ENCODE measurements at regions of chr15 and their contacts with region 1.

Region 1: GRCh38 chr15:51205071-51205959 is 110.6 kb upstream of the TNFAIP8L3 start:
- DNase-seq: no peak
- H3K4me3 ChIP-seq: no peak overlapping the region
- H3K27ac ChIP-seq: no peak overlapping the region
- H3K4me1 ChIP-seq: peaks cover 24% of the 10 kb centered on the region
- H3K27me3 ChIP-seq: no peaks in the 10 kb centered on the region
- CTCF ChIP-seq: no peak

Region 2: DNA sequence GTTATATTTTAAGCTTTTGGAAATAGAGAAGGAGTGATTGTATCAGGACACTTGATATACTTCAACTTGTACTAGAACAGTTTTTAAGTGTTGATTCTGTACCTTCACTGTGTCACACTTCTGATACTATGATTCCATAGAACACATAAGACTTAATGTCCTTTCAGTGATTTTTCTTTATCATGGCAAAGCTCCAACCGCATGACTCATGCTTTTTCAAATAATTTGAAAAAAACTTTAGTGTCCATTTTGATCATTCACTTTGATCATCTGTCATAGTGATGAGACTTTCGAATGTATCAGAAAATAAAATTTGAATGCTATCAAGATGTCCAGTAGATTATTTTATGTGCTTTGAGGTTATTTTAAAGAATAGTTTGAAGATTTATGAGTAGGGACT is 264.8 kb before region 1 on chr15:
- CTCF ChIA-PET with region 1: interaction called, 13 read pairs
- dilution Hi-C with region 1: no loop called
- in situ Hi-C with region 1: no loop called
- intact Hi-C with region 1: no loop called
- DNase-seq: peak; percentile 15
- H3K4me3 ChIP-seq: no peak overlapping the region
- H3K27ac ChIP-seq: no peak overlapping the region
- H3K4me1 ChIP-seq: no peaks in the 10 kb centered on the region
- H3K27me3 ChIP-seq: no peaks in the 10 kb centered on the region
- CTCF ChIP-seq: no peak

Measured in mammary epithelial cell (primary cell).